Caco-2 (cell line): ENCODE measurements at regions of chr19 and their contacts with region 1.

Region 1: DNA sequence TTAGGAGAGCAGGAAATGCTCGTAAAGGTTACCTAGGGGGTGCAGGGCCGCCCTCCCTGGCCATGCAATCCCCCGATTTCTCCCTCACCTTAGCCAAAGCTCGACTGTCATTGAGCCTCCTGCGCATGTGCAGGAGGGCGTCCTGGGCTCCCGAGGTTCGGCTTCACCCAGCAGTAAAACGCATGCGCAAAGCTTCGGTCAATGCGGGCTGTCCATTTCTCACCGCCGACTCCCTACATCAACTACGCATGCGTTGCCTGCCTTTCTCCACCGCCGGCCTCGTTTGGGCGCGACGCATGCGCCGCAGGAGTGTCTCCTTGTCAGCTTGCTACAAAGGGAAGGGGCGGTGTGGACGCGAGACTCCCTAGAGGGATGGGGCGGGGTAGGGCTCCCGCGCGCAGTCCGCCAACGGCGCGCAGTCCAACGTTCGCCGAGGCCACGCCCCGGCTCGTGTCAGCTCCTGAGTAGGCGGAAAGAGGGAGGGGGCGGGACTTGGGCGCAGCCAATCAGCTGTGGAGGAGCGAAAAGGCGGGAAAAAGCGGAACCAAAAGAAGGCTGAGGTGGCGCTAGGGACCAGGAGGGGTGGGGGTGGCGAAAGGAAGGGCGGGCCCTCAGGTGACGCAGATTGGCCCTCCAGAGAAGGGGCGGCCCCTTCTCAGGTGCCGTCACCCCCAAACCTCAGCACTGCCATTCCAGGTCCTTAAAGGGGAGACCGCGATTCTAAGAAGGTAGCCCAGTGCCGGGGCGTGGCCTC is at the starts of genes SYNGR4 and TMEM143:
- DNase-seq: peak; percentile 100
- H3K4me3 ChIP-seq: peak within 1 kb of the TSS; percentile 43
- H3K4me3 Mint-ChIP-seq: peak within 1 kb of the TSS; percentile 83
- H3K27ac Mint-ChIP-seq: peak within 1 kb of the TSS; percentile 84
- H3K4me1 ChIP-seq: peaks cover 6% of the 10 kb centered on the region; the same call in 1 of the 2 replicates
- H3K4me1 Mint-ChIP-seq: peaks cover 14% of the 10 kb centered on the region
- H3K27me3 ChIP-seq: no peaks in the 10 kb centered on the region
- H3K27me3 Mint-ChIP-seq: no peaks in the 10 kb centered on the region
- CTCF ChIP-seq: no peak
- total RNA-seq, gene SYNGR4: 0.32 TPM in 1 of 2 replicates, not detected in the other
- total RNA-seq, gene TMEM143: 20.4 and 24.4 TPM in 2 replicates

Region 2: DNA sequence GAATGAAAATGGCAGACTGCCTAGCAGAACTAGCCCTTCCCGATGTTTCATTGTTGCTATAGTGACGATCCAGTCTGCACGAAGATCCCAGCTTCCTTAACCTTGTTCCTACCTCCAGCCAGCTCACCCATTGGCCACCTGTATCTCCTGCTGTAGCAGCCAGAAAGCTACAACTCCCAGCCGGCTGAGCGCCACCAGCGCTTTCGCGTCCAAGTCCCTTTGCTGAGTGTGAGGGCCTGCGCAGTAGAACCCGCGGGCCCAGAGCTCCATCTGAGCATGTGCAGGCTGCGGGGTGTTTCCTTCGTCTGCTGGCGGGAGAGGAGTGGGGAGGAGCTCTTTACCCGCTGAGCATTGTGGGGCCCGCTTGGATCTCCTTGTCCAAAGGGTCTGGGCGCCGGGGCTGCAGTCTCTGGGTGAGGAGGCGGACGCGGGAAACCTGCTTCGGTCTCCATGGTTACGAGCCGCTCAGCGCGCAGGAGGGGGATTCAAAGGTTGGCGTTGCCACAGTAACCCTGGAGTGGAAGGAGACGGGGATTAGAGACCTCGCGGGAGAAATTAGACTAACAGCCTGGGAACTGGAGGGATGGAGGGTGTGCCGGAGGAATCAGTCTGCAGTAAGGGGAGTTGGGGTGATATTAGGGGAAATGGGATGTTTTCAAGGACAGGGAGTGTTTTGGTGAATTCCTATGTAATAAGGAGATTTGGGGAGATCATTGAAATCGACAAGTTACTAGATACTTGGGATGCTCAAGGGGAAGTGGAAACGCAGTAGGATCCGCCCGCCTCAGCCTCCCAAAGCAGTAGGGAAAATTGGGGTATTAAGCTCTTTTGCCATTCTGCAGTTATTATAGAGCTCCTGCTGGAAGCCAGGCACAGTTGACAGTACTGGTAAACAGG is 160.0 kb before region 1 on chr19:
- CTCF ChIA-PET with region 1: interaction called, 8 read pairs
- POLR2A ChIA-PET with region 1: interaction called, 17 read pairs
- intact Hi-C with region 1: no loop called
- DNase-seq: peak; percentile 97 to 98
- H3K4me3 ChIP-seq: peak overlapping the region; percentile 67
- H3K4me3 Mint-ChIP-seq: no peak overlapping the region
- H3K27ac Mint-ChIP-seq: no peak overlapping the region
- H3K4me1 ChIP-seq: no peaks in the 10 kb centered on the region
- H3K4me1 Mint-ChIP-seq: no peaks in the 10 kb centered on the region
- H3K27me3 ChIP-seq: no peaks in the 10 kb centered on the region
- H3K27me3 Mint-ChIP-seq: no peaks in the 10 kb centered on the region
- CTCF ChIP-seq: no peak

Region 3: DNA sequence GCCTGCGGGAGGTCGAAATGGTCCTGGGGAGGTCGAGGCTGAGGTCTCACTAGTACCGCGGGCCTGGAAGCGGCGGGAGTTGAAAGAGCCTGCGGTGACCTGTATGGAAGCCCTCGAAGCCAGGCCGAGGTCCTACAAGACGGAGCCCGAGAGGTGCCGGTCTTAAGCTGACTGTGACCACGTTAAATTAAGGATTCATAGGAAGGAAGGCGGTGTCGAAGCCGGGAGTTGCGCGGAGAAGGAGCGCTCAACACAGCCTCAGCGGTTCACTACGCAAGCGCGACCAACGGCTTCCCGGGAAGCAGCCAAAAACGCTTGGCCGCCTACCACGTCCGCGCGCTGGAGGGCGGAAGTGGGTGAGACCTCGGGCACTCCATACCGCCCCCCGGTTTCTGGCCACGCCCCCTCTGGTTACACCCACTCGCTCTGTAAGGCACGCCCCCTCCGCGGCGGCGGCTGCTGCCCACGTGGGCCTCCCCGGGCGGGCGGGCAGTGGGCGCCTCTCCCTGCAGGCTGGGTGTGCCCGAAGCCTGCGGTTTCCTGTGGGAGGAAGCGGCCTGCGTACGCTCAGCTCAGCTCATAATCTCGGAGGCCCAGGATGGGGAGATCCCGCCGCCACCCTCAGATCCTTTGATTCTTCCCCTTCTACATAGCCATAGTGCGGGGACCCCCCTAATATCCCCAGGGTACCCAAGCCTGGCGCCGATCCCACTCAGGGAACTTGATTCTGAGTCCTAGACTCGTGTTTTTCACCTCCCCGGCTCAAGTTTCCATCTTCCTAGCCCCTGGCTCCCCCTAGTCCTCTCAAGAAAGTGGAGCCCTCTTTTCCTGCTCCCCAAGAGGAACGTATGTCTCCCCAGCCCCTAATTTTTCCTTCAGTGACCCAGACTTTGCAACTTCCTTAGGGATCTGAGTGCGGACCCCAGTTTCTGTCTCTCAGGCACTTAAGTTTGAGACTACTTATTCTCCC is 42.1 kb before region 1 on chr19:
- CTCF ChIA-PET with region 1: interaction called, 6 read pairs
- POLR2A ChIA-PET with region 1: interaction called, 4 read pairs
- intact Hi-C with region 1: loop called (anchors 5 kb)
- DNase-seq: peak; percentile 98 to 99
- H3K4me3 ChIP-seq: peak overlapping the region; percentile 93
- H3K4me3 Mint-ChIP-seq: peak overlapping the region; percentile 96
- H3K27ac Mint-ChIP-seq: peak overlapping the region; percentile 95
- H3K4me1 ChIP-seq: peaks cover 25% of the 10 kb centered on the region
- H3K4me1 Mint-ChIP-seq: peaks cover 34% of the 10 kb centered on the region
- H3K27me3 ChIP-seq: no peaks in the 10 kb centered on the region
- H3K27me3 Mint-ChIP-seq: no peaks in the 10 kb centered on the region
- CTCF ChIP-seq: peak in 1 of 2 experiments; percentile 15

Region 4: GRCh38 chr19:48333467-48334384 is 30.3 kb before region 1 on chr19:
- CTCF ChIA-PET with region 1: interaction called, 41 read pairs
- POLR2A ChIA-PET with region 1: interaction called, 65 read pairs
- intact Hi-C with region 1: loop called (anchors 1 kb)
- DNase-seq: peak; percentile 94 to 95
- H3K4me3 ChIP-seq: peak overlapping the region; percentile 54
- H3K4me3 Mint-ChIP-seq: peak overlapping the region; percentile 80
- H3K27ac Mint-ChIP-seq: peak overlapping the region; percentile 89
- H3K4me1 ChIP-seq: peaks cover 5% of the 10 kb centered on the region
- H3K4me1 Mint-ChIP-seq: peaks cover 25% of the 10 kb centered on the region
- H3K27me3 ChIP-seq: no peaks in the 10 kb centered on the region
- H3K27me3 Mint-ChIP-seq: no peaks in the 10 kb centered on the region
- CTCF ChIP-seq: peak; percentile 82 to 95

Region 5: GRCh38 chr19:48351341-48351752 is 12.6 kb before region 1 on chr19:
- CTCF ChIA-PET with region 1: interaction called, 14 read pairs
- POLR2A ChIA-PET with region 1: interaction called, 50 read pairs
- intact Hi-C with region 1: loop called (anchors 1 kb)
- DNase-seq: peak; percentile 81 to 85
- H3K4me3 ChIP-seq: no peak overlapping the region
- H3K4me3 Mint-ChIP-seq: no peak overlapping the region
- H3K27ac Mint-ChIP-seq: peak overlapping the region; percentile 43
- H3K4me1 ChIP-seq: peaks cover 33% of the 10 kb centered on the region
- H3K4me1 Mint-ChIP-seq: peaks cover 39% of the 10 kb centered on the region
- H3K27me3 ChIP-seq: no peaks in the 10 kb centered on the region
- H3K27me3 Mint-ChIP-seq: no peaks in the 10 kb centered on the region
- CTCF ChIP-seq: peak; percentile 82 to 90

Region 6: GRCh38 chr19:48398375-48399235 is 34.6 kb after region 1 on chr19:
- CTCF ChIA-PET with region 1: no interaction called
- POLR2A ChIA-PET with region 1: interaction called, 11 read pairs
- intact Hi-C with region 1: loop called (anchors 2 kb)
- DNase-seq: peak; percentile 93 to 95
- H3K4me3 ChIP-seq: peak overlapping the region; percentile 51
- H3K4me3 Mint-ChIP-seq: peak overlapping the region; percentile 83
- H3K27ac Mint-ChIP-seq: peak overlapping the region; percentile 67
- H3K4me1 ChIP-seq: peaks cover 35% of the 10 kb centered on the region
- H3K4me1 Mint-ChIP-seq: peaks cover 50% of the 10 kb centered on the region
- H3K27me3 ChIP-seq: no peaks in the 10 kb centered on the region
- H3K27me3 Mint-ChIP-seq: no peaks in the 10 kb centered on the region
- CTCF ChIP-seq: no peak

Region 7: DNA sequence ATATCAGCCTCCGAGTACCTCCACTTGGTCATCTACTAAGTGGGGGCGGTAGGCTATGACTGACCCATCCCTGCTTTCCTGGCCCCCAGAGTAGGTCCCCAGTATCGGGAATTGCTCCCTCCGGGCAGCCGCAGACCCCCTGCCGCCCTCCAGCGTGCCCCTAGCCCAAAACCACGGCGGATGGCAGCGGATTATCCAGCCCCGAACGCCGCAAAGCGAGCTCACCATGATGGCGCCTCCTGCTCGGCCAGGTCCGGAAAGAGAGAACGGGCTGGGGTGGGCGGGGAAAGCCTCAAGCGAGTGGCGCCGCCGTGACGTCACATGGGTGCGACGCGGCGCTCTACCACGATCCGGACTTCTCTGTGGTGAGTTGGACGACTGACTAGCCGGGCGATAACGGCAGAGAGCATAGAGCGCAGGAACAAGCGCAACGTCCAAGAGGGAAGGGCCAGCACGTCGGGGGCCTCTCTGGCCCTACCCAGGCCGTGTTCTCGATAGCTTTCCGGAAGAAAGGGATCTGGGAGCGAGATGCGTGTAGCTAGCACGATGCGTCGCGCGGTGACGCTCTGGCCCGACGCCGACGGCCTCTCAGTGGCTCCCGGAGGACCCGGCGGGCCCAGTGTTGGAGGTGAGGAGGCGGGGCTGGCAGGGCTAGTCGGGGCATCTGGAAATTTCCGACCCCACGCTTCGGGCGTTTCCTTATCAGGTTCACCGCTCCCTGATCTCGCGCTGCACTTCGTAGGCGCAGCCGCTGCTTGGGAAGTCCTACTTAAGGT is 255.1 kb after region 1 on chr19 and contains the starts of genes RPL18 and SPHK2:
- CTCF ChIA-PET with region 1: interaction called, 6 read pairs
- POLR2A ChIA-PET with region 1: interaction called, 13 read pairs
- intact Hi-C with region 1: no loop called
- DNase-seq: peak; percentile 99
- H3K4me3 ChIP-seq: peak within 1 kb of the TSS; percentile 85
- H3K4me3 Mint-ChIP-seq: peak within 1 kb of the TSS; percentile 96
- H3K27ac Mint-ChIP-seq: peak within 1 kb of the TSS; percentile 98
- H3K4me1 ChIP-seq: peaks cover 39% of the 10 kb centered on the region
- H3K4me1 Mint-ChIP-seq: peaks cover 36% of the 10 kb centered on the region
- H3K27me3 ChIP-seq: no peaks in the 10 kb centered on the region
- H3K27me3 Mint-ChIP-seq: no peaks in the 10 kb centered on the region
- CTCF ChIP-seq: no peak
- total RNA-seq, gene RPL18: 1,812 and 1,896 TPM in 2 replicates
- total RNA-seq, gene SPHK2: 134 and 140 TPM in 2 replicates